CD4-positive, alpha-beta memory T cell (primary cell): ENCODE measurements at regions of chr3 and their contacts with region 1.

Region 1: DNA sequence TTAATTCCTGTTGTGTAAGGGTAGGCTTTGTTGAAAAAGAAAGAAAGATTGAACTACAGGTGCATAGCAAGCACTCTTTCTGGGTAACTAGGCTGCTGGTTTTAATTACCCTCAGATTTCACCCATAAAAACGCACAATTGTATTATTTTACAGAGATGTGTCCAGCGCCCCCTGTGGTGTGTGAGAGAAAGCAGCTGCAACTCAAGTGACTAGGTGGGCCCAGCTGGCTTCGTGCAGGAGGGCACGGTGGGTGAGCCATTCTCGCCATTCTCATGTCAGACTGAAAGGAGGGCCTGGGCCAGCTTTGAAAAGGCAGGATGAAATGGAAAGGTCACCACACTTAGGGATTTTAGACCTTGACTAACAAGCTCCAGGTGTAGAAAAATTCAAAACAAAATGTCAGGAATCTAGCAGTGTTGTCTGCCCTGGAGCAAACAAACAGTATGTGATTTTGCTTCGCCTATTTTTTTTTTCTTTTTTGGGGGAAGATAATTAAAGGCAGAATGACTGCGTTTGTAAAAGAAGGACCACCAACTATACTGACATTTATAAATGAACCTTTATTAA is 122.5 kb downstream of the LRIG1 start:
- DNase-seq: peak; percentile 49 to 70 (median 56)
- H3K4me3 ChIP-seq: no peak overlapping the region
- H3K4me3 Mint-ChIP-seq: peak overlapping the region in 2 of 8 donors; percentile 12 to 32
- H3K27ac ChIP-seq: peak overlapping the region; percentile 45
- H3K27ac Mint-ChIP-seq: peak overlapping the region; percentile 82 to 95 (median 89)
- H3K4me1 ChIP-seq: peaks cover 25% of the 10 kb centered on the region
- H3K4me1 Mint-ChIP-seq: peaks cover 19 to 37% (median 22%) of the 10 kb centered on the region in 4 donors
- H3K27me3 ChIP-seq: no peaks in the 10 kb centered on the region
- H3K27me3 Mint-ChIP-seq: no peaks in the 10 kb centered on the region

Region 2: DNA sequence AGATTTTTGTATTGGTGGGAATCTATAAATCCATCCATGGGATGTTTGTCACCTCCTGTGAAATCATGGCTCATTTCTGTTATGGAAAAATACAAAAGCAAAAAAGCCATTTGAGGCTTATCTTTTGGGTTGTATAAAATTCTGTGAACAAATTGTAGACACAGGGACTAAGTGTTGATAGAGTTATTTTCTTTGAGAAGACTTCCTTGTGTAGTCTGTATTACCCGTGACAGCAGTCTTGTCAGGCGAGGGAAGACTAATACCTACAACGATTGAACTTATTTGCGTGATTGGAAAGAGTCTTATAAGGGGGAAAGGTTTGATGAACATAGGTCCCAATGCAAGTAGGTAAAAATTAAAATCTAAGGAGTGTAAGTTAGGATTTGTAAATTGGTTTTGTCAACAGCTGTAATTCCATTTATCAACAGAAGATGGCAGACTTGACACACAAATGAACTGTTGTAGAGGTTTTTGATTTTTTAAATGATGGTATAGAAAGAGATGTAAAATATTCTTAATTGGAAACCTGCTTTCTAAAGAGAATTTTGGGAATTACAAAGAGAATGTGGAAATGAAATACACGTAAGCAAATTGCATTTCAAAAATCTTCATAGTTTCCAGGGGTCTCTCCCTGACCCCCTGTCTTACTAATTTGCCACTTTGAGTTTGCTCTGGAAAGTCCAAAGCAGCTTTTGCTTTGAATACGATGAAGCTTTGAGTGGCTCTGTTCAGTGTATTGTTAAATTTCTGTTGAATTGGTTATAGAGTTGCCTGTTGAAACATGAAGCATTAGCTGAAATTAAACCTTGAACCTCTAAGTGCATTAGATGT is 124.3 kb before region 1 on chr3:
- CTCF ChIA-PET with region 1: interaction called, 46 read pairs
- POLR2A ChIA-PET with region 1: interaction called, 6 read pairs
- intact Hi-C with region 1: no loop called
- DNase-seq: peak in 4 of 5 donors; percentile 30 to 50 (median 41)
- H3K4me3 ChIP-seq: no peak overlapping the region
- H3K4me3 Mint-ChIP-seq: no peak overlapping the region
- H3K27ac ChIP-seq: no peak overlapping the region
- H3K27ac Mint-ChIP-seq: peak overlapping the region in 2 of 7 donors; percentile 24 to 64
- H3K4me1 ChIP-seq: no peaks in the 10 kb centered on the region
- H3K4me1 Mint-ChIP-seq: peaks cover 4 to 11% (median 5%) of the 10 kb centered on the region in 4 donors
- H3K27me3 ChIP-seq: no peaks in the 10 kb centered on the region
- H3K27me3 Mint-ChIP-seq: no peaks in the 10 kb centered on the region

Region 3: DNA sequence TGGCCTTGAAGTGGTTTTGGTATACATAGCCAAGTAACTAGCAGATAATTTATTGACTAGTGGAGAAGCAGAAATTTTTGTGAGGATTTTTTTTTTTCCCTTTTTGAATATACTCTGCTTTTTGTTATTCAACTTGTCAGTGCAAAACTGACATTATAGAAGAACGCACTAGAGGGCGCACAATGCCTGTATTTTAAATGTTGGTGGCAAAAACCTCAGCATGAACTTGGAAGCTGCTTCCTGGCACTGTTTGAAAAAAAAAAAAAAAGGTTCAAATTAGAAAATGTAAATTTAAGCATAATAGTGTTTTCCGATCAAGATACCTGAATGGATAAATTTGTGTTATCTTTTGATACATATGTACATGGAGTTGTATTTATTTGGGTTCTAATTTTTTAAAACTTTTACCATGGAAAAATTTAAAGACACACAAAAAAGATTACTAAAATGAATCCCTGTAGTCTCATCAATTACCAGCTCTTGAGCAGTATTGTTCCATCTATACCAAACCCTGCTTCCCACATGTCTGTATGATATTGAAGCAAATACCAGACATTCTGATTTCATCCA is 101.5 kb before region 1 on chr3:
- CTCF ChIA-PET with region 1: interaction called, 80 read pairs
- POLR2A ChIA-PET with region 1: interaction called, 24 read pairs
- intact Hi-C with region 1: loop called (anchors 1 kb)
- DNase-seq: peak; percentile 71 to 75 (median 73)
- H3K4me3 ChIP-seq: no peak overlapping the region
- H3K4me3 Mint-ChIP-seq: no peak overlapping the region
- H3K27ac ChIP-seq: no peak overlapping the region
- H3K27ac Mint-ChIP-seq: peak overlapping the region; percentile 6 to 86 (median 71)
- H3K4me1 ChIP-seq: peaks cover 34% of the 10 kb centered on the region
- H3K4me1 Mint-ChIP-seq: peaks cover 25 to 45% (median 34%) of the 10 kb centered on the region in 4 donors
- H3K27me3 ChIP-seq: no peaks in the 10 kb centered on the region
- H3K27me3 Mint-ChIP-seq: no peaks in the 10 kb centered on the region

Region 4: GRCh38 chr3:66317750-66318376 is 60.5 kb before region 1 on chr3:
- CTCF ChIA-PET with region 1: interaction called, 11 read pairs
- POLR2A ChIA-PET with region 1: no interaction called
- intact Hi-C with region 1: no loop called
- DNase-seq: no peak
- H3K4me3 ChIP-seq: no peak overlapping the region
- H3K4me3 Mint-ChIP-seq: no peak overlapping the region
- H3K27ac ChIP-seq: no peak overlapping the region
- H3K27ac Mint-ChIP-seq: no peak overlapping the region
- H3K4me1 ChIP-seq: peaks cover 10% of the 10 kb centered on the region
- H3K4me1 Mint-ChIP-seq: peaks cover 20 to 39% (median 25%) of the 10 kb centered on the region in 4 donors
- H3K27me3 ChIP-seq: no peaks in the 10 kb centered on the region
- H3K27me3 Mint-ChIP-seq: no peaks in the 10 kb centered on the region

Region 5: DNA sequence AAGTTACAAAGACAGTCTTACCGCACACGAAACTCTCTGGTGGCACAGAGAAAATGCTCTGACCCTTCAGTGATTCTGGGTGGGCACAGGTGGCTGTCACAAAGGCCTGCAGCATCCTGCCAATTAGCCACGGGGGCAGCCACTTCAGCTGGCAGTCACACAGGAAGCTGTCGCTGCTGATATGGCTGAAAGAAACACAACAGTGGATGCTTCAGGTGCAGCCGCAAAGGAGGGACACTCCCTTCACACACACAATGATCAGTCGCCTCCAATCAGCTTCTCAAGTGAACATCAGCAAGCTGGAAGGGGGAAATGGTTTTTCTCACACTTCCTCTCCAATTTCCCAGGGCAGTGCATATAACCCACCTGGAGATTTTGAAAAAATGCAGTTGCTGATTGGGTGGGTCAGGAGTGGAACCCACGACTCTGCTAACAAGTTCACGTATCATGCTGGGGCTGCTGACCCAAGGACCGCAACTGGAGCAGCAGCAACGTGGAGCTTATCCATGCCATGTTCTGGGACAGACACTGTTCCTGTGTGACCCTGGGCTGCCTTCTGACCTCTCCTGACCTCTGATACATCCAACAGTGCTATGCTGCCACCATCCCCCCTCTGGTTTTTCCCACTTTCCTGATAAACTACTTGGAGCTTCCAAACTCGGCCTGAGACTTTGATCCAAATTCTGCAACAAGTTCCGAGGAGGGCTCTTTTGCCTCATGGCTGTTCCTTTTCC is 15.8 kb after region 1 on chr3:
- CTCF ChIA-PET with region 1: interaction called, 53 read pairs
- POLR2A ChIA-PET with region 1: interaction called, 21 read pairs
- intact Hi-C with region 1: loop called (anchors 2 kb)
- DNase-seq: peak; percentile 74 to 83 (median 81)
- H3K4me3 ChIP-seq: peak overlapping the region; percentile 44 to 49
- H3K4me3 Mint-ChIP-seq: peak overlapping the region; percentile 75 to 94 (median 90)
- H3K27ac ChIP-seq: peak overlapping the region; percentile 45
- H3K27ac Mint-ChIP-seq: peak overlapping the region; percentile 90 to 99 (median 97)
- H3K4me1 ChIP-seq: peaks cover 59% of the 10 kb centered on the region
- H3K4me1 Mint-ChIP-seq: peaks cover 50 to 61% (median 56%) of the 10 kb centered on the region in 4 donors
- H3K27me3 ChIP-seq: no peaks in the 10 kb centered on the region
- H3K27me3 Mint-ChIP-seq: no peaks in the 10 kb centered on the region

Region 6: DNA sequence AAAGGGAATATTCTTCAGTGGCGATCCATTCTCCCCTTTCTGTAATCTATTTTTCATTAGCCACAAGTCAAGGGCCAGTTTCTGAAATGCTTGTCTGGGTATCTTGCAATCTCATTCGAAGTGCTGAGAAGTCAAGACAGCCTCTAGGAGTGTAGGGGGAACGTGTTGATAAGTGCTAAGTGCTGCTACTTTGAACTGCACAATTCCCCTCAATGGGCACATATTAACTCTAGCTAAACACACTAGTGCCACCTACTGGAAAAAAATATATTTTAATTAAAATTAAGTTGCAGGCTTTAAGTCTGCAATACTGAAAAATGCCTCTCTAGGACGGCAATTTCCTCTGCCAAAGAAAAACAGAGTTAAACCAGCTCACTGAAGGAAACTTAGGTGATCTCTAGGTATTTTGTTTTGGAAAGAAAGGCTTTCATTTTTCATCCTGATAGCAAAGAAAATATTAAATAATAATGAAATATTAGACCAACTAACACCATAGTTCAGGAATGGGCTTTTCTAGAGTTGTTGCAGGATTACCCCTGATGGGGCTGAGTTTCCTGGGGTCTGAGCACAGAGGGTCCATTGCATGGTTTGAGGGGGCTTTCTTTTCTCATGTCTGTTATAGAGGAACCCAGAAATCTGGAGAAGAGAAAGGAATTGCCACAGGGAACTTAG is 437.9 kb after region 1 on chr3:
- CTCF ChIA-PET with region 1: interaction called, 35 read pairs
- POLR2A ChIA-PET with region 1: no interaction called
- intact Hi-C with region 1: loop called (anchors 1 kb)
- DNase-seq: peak in 4 of 5 donors; percentile 60 to 69 (median 64)
- H3K4me3 ChIP-seq: no peak overlapping the region
- H3K4me3 Mint-ChIP-seq: no peak overlapping the region
- H3K27ac ChIP-seq: no peak overlapping the region
- H3K27ac Mint-ChIP-seq: no peak overlapping the region
- H3K4me1 ChIP-seq: no peaks in the 10 kb centered on the region
- H3K4me1 Mint-ChIP-seq: peaks cover 0 to 2% (median under 1%) of the 10 kb centered on the region in 4 donors
- H3K27me3 ChIP-seq: no peaks in the 10 kb centered on the region
- H3K27me3 Mint-ChIP-seq: peaks cover 0 to 9% of the 10 kb centered on the region in 2 donors